ENCODE measurements at regions of chr15 and their contacts with region 1.

Region 1: DNA sequence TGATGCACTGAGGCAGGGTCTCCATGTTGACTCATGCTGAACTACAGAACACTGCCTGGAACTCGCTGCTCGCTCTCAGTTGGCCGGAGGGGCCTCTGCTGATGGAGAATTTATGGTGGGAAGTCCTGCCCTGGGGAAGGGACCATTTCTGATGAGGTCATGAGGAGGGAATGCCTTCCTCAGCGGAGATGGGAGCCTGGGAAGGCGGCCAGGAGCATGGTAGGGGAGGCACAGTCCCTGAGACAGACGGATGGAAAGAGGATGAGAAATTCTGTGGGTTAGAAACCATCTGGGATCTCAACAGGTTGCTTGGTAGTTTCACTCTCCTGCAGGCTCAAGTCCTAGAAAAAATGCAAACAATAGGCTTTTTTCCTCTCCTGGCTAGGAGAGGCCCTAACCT is 56.8 kb upstream of the TPM1 start:
- DNase-seq: no peak
- H3K4me3 ChIP-seq: no peak overlapping the region
- H3K27ac ChIP-seq: no peak overlapping the region
- H3K4me1 ChIP-seq: peaks cover 0 to 7% (median 1%) of the 10 kb centered on the region in 4 experiments; a peak in 3 of 7 replicates
- H3K27me3 ChIP-seq: no peaks in the 10 kb centered on the region
- CTCF ChIP-seq: no peak
- EP300 ChIP-seq: no peak
- POLR2A ChIP-seq: no peak
- RAD21 ChIP-seq: no peak

Region 2: DNA sequence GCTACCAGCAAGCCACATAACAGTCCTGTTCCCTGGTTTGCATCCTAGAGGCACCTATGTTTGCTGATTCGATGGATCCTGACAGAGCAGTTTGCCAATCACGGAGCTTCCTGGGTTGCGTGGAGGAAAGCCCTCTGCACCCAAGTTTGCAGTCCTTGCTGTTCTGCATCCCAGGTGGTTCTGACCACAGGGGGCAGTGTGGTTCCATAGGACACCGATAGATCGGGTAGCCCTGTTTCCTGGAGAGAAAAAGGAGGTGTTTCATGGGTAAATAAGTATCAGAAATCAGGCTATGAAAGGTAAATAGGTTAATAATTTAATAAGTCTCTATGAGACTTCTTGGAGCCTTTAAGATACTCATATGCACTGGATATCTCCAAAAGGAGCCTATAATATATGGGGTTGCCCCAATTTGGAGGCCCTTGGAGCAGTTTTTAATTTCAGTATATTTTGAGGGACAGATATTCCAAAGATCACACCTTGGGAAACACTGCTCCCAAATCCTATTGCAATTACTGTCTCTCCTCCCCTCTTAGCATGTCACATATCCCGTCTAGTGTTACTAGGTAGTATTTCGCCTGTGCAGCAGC is 137.8 kb before region 1 on chr15:
- CTCF ChIA-PET with region 1: interaction called, 15 read pairs
- POLR2A ChIA-PET with region 1: no interaction called
- DNase-seq: peak; percentile 60 to 87
- H3K4me3 ChIP-seq: no peak overlapping the region
- H3K27ac ChIP-seq: no peak overlapping the region
- H3K4me1 ChIP-seq: peaks cover 12 to 26% (median 22%) of the 10 kb centered on the region in 4 experiments
- H3K27me3 ChIP-seq: no peaks in the 10 kb centered on the region
- CTCF ChIP-seq: peak; percentile 64 to 81 (median 76)
- EP300 ChIP-seq: no peak
- POLR2A ChIP-seq: no peak
- RAD21 ChIP-seq: peak; percentile 85 to 92

Region 3: DNA sequence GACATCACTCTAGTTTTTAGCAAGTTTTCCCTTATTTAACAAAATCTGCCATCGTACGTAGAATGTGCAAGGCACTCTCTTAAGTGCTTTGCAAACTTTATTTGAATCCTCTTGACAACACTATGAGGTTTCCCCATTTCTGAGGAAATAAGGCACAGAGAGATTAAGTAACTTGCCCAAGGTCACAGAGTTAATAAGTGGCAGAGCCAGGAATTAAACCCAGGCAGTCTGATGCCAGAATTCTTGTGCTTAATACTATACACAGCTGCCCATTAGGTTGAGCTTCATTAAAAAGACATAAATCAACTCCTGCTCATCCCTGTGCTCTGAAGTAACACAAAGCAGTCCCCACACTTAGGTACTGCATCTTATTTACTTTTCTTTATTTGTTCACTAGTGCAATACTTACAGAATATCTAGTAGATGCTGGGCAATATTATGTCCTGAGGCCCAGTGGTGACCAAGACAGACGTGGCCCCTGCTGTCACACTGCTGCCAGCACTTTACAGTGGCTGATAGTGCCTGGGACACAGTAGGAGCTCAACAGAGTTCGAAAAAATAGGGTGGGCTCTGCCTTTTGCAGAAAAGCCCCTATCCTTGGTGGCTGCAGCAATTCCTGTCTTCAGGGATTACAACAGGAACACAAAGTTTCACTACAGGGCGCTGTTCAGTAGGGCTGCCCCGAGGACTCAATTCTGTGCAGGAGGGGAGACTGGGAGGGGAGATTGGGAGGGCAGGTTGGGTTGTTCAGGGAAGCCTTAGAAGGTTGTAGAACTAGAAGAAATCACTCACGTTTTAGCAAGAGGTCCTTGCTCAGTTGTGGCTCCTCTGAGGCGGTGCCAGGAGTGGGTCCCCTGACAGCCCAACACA is 81.5 kb before region 1 on chr15:
- CTCF ChIA-PET with region 1: no interaction called
- POLR2A ChIA-PET with region 1: no interaction called
- DNase-seq: no peak
- H3K4me3 ChIP-seq: no peak overlapping the region
- H3K27ac ChIP-seq: no peak overlapping the region
- H3K4me1 ChIP-seq: peaks cover 0 to 11% (median 5%) of the 10 kb centered on the region in 4 experiments; a peak in 6 of 7 replicates
- H3K27me3 ChIP-seq: no peaks in the 10 kb centered on the region
- CTCF ChIP-seq: no peak
- EP300 ChIP-seq: no peak
- POLR2A ChIP-seq: no peak
- RAD21 ChIP-seq: no peak

Region 4: GRCh38 chr15:62999923-63000561 is 14.3 kb after region 1 on chr15:
- CTCF ChIA-PET with region 1: interaction called, 24 read pairs
- POLR2A ChIA-PET with region 1: no interaction called
- DNase-seq: no peak
- H3K4me3 ChIP-seq: no peak overlapping the region
- H3K27ac ChIP-seq: no peak overlapping the region
- H3K4me1 ChIP-seq: no peaks in the 10 kb centered on the region
- H3K27me3 ChIP-seq: no peaks in the 10 kb centered on the region
- CTCF ChIP-seq: no peak
- EP300 ChIP-seq: no peak
- POLR2A ChIP-seq: no peak
- RAD21 ChIP-seq: no peak